ENCODE measurements at regions of chr15 and their contacts with region 1.

Region 1: DNA sequence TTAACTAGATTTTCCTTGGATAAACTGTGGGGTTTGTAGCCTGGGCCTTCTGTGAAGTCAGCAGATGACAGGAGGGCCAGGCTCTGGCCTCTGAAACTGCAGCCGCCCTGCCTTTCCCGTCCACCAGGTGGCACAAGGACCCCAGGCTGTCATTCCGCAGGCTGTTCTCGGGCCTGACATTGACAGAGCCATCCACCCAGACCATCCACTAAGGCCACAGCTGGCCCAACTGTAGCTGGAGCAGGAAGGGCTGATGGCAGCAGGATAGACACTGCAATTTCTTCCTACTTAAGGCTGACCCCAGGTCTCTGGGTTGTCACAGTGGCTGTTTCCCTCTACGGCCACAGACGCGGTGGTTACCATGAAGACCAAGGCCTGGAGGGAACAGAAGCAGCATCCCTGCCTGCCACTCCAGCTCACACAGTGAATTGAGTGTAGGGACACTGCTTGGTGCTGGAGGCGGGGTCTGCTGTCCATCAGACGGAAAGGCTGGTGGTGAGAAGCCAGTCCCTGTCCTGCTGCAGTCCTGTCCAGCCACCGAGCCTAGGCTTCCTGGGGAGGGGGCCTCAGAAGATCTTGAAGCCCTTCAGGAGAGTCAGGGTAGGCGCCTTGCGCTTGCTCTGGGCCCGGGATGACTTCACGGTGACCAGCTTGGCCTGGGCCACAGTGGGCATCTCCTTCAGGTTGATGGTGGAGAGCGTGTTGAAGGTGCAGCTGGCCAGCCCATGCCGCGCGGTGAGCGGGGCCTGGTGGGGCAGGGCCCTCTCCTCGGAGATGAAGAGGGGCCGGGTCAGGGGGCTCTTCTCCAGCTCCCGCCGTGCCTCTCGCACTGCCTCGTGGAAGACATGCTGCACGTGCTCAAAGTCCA is 9.4 kb downstream of the SLC51B start:
- DNase-seq: peak; percentile 75 to 86 (median 78)
- ATAC-seq: peak; percentile 76 to 87 (median 82)
- H3K4me3 ChIP-seq: no peak overlapping the region
- H3K27ac ChIP-seq: peak overlapping the region in 7 of 12 donors; percentile 16 to 61 (median 56)
- H3K4me1 ChIP-seq: peaks cover 3 to 38% (median 19%) of the 10 kb centered on the region in 12 donors
- H3K27me3 ChIP-seq: no peaks in the 10 kb centered on the region
- CTCF ChIP-seq: peak; percentile 81 to 96 (median 92)
- POLR2A ChIP-seq: no peak

Region 2: GRCh38 chr15:65077981-65078352 is 23.4 kb after region 1 on chr15:
- intact Hi-C with region 1: loop called in 3 of 10 experiments (anchors 1 to 2 kb)
- DNase-seq: peak; percentile 61 to 85 (median 73)
- ATAC-seq: peak; percentile 5 to 61 (median 58)
- H3K4me3 ChIP-seq: peak overlapping the region in 5 of 12 donors; percentile 2 to 26 (median 16)
- H3K27ac ChIP-seq: peak overlapping the region in 5 of 12 donors; percentile 35 to 86 (median 73)
- H3K4me1 ChIP-seq: peaks cover 7 to 74% (median 32%) of the 10 kb centered on the region in 12 donors
- H3K27me3 ChIP-seq: peaks cover 0 to 20% (median 0%) of the 10 kb centered on the region in 9 donors
- CTCF ChIP-seq: peak; percentile 42 to 71 (median 60)
- POLR2A ChIP-seq: no peak

Region 3: GRCh38 chr15:65086017-65086679 is 31.6 kb after region 1 on chr15:
- intact Hi-C with region 1: loop called in 5 of 10 experiments (anchors 1 to 5 kb)
- DNase-seq: peak in 1 of 5 donors; percentile 52
- ATAC-seq: no peak
- H3K4me3 ChIP-seq: no peak overlapping the region
- H3K27ac ChIP-seq: peak overlapping the region in 8 of 12 donors; percentile 64 to 97 (median 92)
- H3K4me1 ChIP-seq: peaks cover 12 to 85% (median 47%) of the 10 kb centered on the region in 12 donors
- H3K27me3 ChIP-seq: peaks cover 0 to 3% (median 0%) of the 10 kb centered on the region in 9 donors
- CTCF ChIP-seq: peak in 9 of 12 donors; percentile 8 to 51 (median 40)
- POLR2A ChIP-seq: no peak

Region 4: GRCh38 chr15:65101411-65101890 is 46.9 kb after region 1 on chr15:
- intact Hi-C with region 1: loop called in 9 of 10 experiments (anchors 1 to 5 kb)
- DNase-seq: peak; percentile 65 to 77 (median 69)
- ATAC-seq: peak in 3 of 4 donors; percentile 67 to 76 (median 74)
- H3K4me3 ChIP-seq: no peak overlapping the region
- H3K27ac ChIP-seq: no peak overlapping the region
- H3K4me1 ChIP-seq: peaks cover 0 to 5% (median 0%) of the 10 kb centered on the region in 12 donors
- H3K27me3 ChIP-seq: no peaks in the 10 kb centered on the region
- CTCF ChIP-seq: peak; percentile 64 to 81 (median 74)
- POLR2A ChIP-seq: no peak

Region 5: GRCh38 chr15:65192016-65192415 is 137.4 kb after region 1 on chr15:
- intact Hi-C with region 1: no loop called
- DNase-seq: no peak
- ATAC-seq: no peak
- H3K4me3 ChIP-seq: no peak overlapping the region
- H3K27ac ChIP-seq: no peak overlapping the region
- H3K4me1 ChIP-seq: peaks cover 0 to 12% (median 0%) of the 10 kb centered on the region in 12 donors
- H3K27me3 ChIP-seq: no peaks in the 10 kb centered on the region
- CTCF ChIP-seq: no peak
- POLR2A ChIP-seq: no peak

Region 6: DNA sequence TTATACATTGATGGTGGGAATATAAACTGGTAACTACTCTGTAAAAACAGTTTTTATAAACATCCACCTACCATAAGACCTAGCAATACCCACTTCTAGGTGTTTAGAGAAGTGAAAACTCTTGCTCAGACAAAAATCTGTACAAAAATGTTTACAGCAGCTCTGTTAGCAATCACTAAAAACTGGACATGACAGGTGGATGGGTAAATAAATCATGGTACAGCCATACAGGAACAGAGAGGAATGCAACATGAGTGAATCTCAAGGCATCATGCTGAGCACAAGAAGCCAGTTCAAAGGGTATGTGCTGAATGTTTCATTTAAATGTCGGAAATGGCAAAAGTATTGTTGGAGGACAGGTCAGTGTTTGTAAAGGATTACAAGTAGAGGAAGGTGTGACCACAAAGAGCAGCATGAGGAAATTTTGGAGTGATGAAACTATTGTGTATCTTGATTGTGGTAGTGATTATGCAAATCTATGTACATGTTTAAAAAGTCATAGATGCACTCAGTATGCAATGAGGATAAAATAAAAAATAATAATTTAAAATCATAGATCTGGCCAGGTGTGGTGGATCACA is 238.5 kb after region 1 on chr15:
- intact Hi-C with region 1: loop called in 1 of 10 experiments (anchors 10 kb)
- DNase-seq: no peak
- ATAC-seq: no peak
- H3K4me3 ChIP-seq: no peak overlapping the region
- H3K27ac ChIP-seq: no peak overlapping the region
- H3K4me1 ChIP-seq: peaks cover 0 to 18% (median 0%) of the 10 kb centered on the region in 12 donors
- H3K27me3 ChIP-seq: no peaks in the 10 kb centered on the region
- CTCF ChIP-seq: no peak
- POLR2A ChIP-seq: no peak